Uterus (tissue), 4 donors: ENCODE measurements at regions of chr19 and their contacts with region 1.

Region 1: GRCh38 chr19:21358768-21359451 is at the start of gene ZNF738:
- DNase-seq: peak; percentile 92 to 93
- H3K4me3 ChIP-seq: peak within 1 kb of the TSS; percentile 70 to 94
- H3K27ac ChIP-seq: peak within 1 kb of the TSS; percentile 73 to 80
- H3K4me1 ChIP-seq: no peaks in the 10 kb centered on the region
- H3K27me3 ChIP-seq: no peaks in the 10 kb centered on the region
- CTCF ChIP-seq: peak in 1 of 4 experiments; percentile 2
- POLR2A ChIP-seq: peak; percentile 31 to 67
- total RNA-seq, gene ZNF738: 0.59 to 48.8 (median 3.3) TPM

Region 2: DNA sequence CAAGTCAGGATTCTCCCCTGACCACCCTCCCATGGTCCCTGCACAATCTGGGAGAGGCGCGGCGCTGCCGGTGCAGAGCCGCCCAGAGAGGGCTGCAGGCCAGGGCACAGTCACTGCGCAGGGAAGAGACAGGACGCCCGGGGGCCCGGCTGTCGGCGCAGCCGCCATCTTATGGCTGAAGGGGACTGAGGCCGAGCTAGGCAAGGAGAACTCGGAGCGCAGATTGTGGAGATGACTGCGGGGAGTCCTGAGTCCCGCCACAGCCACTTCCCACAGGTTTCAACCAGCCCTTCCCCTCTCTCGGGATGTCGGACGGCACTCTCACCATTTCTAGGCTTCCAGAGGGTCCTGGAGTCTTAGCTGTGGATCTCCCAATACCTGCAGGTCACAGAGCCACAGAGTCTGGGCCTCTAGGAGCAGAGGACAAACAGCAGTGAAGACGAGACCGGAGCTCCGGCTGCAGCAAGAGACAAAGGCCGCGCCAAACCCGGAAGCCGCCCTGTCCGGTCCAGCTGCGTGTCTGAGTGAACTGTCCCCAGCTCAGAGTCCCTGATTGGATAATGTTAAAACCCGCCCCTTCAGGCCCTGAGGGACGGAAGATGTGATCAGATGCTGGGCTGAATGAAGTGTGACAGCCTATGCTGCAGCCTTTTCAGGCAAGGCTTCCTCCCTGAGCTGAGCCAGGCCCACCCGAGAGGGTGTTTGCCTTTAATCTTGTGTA is 29.9 kb before region 1 on chr19 and contains the start of gene ZNF708:
- intact Hi-C with region 1: loop called (anchors 2 kb)
- DNase-seq: peak; percentile 81 to 87
- H3K4me3 ChIP-seq: peak within 1 kb of the TSS; percentile 61 to 91
- H3K27ac ChIP-seq: peak within 1 kb of the TSS; percentile 87 to 98
- H3K4me1 ChIP-seq: no peaks in the 10 kb centered on the region
- H3K27me3 ChIP-seq: no peaks in the 10 kb centered on the region
- CTCF ChIP-seq: no peak
- POLR2A ChIP-seq: peak; percentile 53 to 66
- total RNA-seq, gene ZNF708: 2.3 to 30.4 (median 26.1) TPM